Heart left ventricle (tissue), 16 donors: ENCODE measurements at regions of chr3 and their contacts with region 1.

Region 1: DNA sequence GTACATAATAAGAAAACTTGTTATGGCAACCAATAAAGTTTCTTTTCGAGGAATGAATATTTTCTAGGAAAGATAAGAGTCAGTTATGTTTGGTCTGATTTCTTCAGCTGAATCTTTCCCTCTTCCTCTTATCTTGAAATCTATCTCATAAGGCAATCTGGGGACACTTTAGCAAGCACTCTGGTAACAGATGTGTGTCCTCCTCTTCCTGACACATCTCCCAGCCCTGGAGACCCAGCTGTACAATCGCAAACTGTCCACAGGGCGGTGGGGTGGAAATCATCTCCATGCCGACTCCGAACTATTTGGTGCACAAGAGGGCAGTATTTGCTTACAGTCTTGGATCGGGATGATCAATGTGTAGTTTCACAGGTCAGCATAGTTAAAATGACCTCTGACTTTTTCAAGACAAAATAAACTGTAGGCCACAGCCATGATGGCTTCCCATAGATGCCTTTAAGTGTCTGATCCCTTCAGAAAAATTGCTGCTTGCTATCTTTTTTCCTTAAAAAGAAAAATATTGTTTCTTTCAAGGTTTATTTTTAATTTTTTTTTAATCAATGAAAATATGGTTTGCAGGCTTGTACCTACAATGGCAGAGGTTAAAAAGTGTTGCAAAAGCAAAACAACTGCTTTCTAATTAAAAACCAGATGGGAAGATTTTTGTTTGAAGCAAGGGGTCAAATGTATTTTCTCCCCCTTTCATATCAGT is 17.7 kb downstream of the EEFSEC start:
- DNase-seq: peak in 4 of 5 donors; percentile 55 to 64 (median 62)
- ATAC-seq: peak; percentile 54 to 75 (median 72)
- H3K4me3 ChIP-seq: no peak overlapping the region
- H3K27ac ChIP-seq: no peak overlapping the region
- H3K4me1 ChIP-seq: peaks cover 0 to 73% (median 40%) of the 10 kb centered on the region in 12 donors
- H3K27me3 ChIP-seq: no peaks in the 10 kb centered on the region
- CTCF ChIP-seq: peak; percentile 49 to 88 (median 68)
- POLR2A ChIP-seq: no peak

Region 2: DNA sequence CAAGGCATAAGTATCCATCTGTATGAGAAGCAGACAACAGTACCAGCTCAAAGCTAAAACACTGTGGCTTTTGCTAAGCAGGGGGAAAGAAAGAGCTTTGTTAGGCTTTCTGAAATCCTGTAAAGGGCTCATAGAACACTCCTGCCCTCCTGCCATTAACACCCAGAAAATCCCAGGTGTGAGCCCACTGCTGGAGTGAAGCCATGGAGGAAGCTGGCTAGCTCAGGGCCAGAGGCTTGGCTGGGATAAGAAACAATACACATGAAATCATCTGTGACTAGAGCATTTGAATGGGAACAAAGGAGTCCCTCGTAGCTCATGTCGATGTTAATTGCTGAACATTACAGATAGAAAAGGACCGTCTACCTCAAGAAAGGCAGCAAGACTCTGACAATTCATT is 70.8 kb before region 1 on chr3:
- intact Hi-C with region 1: no loop called
- DNase-seq: no peak
- ATAC-seq: peak in 1 of 4 donors; percentile 28
- H3K4me3 ChIP-seq: no peak overlapping the region
- H3K27ac ChIP-seq: peak overlapping the region in 6 of 12 donors; percentile 3 to 41 (median 32)
- H3K4me1 ChIP-seq: peaks cover 0 to 23% (median 6%) of the 10 kb centered on the region in 12 donors
- H3K27me3 ChIP-seq: no peaks in the 10 kb centered on the region
- CTCF ChIP-seq: no peak
- POLR2A ChIP-seq: no peak

Region 3: DNA sequence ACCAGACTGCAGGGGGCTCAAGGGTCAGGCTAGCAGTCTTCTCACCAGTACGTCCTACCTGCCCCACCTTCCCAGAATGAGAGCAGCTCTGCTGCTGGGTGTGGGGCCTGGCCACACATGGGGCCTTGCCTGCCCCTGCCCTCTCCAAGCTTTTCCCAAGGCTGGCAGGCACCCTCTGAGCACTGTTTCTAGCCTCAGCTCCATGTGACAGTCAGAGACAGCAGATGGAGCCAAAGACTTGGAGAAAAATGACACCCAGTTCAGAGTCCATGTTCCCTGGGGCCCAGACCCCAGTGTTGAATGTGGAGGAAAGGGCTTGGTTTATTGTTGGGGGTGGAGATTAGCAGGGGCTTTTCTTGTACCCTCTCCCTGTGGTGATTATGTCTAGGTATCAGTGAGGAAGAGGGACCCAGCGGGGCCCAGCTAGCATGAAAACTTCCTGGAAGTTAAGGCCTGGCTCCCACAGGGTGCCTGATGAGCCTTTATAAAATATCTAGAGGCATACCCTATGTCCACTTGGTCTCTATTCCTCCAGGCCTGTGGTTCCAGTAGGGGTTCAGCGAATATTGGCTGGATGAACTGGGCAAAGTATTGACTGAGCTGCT is 136.2 kb after region 1 on chr3:
- intact Hi-C with region 1: loop called in 2 of 10 experiments (anchors 10 kb)
- DNase-seq: peak in 1 of 5 donors; percentile 9
- ATAC-seq: peak in 1 of 4 donors; percentile 18
- H3K4me3 ChIP-seq: no peak overlapping the region
- H3K27ac ChIP-seq: no peak overlapping the region
- H3K4me1 ChIP-seq: peaks cover 0 to 40% (median 8%) of the 10 kb centered on the region in 12 donors
- H3K27me3 ChIP-seq: no peaks in the 10 kb centered on the region
- CTCF ChIP-seq: peak in 2 of 12 donors; percentile 20 to 28
- POLR2A ChIP-seq: no peak

Region 4: DNA sequence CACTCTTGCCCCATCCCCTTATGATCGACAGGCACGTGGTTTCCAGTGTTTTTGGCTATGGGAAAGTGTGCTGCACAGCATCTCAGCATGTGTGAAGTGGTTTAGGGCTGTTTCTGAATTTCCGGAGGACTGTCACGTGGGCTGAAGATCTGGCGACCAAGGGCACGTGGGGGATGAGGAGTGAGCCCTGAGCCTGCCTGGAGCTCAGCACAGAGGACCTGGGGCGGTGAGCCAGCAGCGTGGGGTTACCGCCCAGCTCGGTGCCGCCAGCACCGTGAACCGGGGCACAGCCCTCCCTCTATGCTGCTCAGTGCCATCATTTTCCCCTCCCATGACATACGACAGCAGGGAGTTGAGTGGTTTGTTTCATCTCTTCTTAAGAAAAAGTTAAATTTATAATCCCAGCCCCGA is 145.5 kb after region 1 on chr3:
- intact Hi-C with region 1: loop called in 9 of 10 experiments (anchors 5 to 10 kb)
- DNase-seq: peak in 1 of 5 donors; percentile 13
- ATAC-seq: peak in 2 of 4 donors; percentile 21 to 32
- H3K4me3 ChIP-seq: no peak overlapping the region
- H3K27ac ChIP-seq: no peak overlapping the region
- H3K4me1 ChIP-seq: peaks cover 0 to 20% (median 3%) of the 10 kb centered on the region in 12 donors
- H3K27me3 ChIP-seq: no peaks in the 10 kb centered on the region
- CTCF ChIP-seq: no peak
- POLR2A ChIP-seq: no peak

Region 5: DNA sequence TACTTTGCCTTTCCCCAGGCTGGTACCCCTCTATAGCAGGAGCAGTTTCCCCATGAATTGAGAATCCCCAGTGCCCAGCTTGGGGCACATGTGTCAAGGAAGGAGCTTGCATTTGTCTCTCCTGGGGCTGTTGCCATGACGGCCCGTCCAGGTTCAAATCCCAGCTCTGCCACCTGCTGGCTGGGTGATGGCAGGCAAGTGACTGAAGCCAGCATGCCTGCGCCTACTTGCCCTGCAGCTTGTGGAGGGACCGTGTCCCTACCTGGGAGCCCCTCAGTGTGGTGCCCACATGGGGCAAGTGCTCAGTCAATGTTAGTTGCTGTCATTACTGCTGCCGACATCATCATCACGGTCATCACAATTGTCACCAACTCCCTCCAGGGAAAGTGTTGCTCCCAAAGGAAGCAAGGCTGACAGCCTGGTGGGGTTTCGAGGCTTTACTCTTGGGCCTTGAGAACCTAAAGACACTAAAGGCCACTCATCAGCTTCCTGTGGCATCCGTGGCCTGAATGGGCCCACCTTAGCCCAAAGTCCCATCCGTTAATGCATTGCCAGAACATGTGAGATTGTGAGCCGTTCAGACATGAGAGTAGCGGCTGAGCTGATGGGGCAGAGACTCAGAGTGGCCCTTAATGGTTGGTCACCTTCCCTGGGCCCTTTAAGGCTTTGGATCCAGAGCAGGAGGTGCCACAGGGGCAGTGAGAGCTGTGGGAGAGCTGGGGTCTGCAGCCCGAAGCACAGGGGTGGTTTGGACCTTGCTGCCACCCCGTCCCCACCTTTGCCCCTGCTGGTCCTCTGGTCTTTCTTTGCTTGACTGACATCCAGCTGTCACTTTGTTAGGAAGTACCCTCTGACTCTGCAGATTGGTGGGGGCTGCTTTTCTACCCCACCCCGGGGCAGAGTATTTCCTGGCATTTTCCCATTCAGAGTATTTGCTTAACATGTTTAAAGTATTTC is 151.4 kb after region 1 on chr3:
- intact Hi-C with region 1: loop called (anchors 2 to 10 kb)
- DNase-seq: peak; percentile 41 to 80 (median 49)
- ATAC-seq: peak; percentile 45 to 72 (median 56)
- H3K4me3 ChIP-seq: no peak overlapping the region
- H3K27ac ChIP-seq: no peak overlapping the region
- H3K4me1 ChIP-seq: peaks cover 0 to 14% (median 0%) of the 10 kb centered on the region in 12 donors
- H3K27me3 ChIP-seq: no peaks in the 10 kb centered on the region
- CTCF ChIP-seq: peak; percentile 34 to 72 (median 56)
- POLR2A ChIP-seq: no peak

Region 6: GRCh38 chr3:128603811-128604775 is 433.1 kb after region 1 on chr3:
- intact Hi-C with region 1: loop called in 6 of 10 experiments (anchors 1 to 10 kb)
- DNase-seq: no peak
- ATAC-seq: no peak
- H3K4me3 ChIP-seq: no peak overlapping the region
- H3K27ac ChIP-seq: no peak overlapping the region
- H3K4me1 ChIP-seq: peaks cover 0 to 15% (median 7%) of the 10 kb centered on the region in 12 donors
- H3K27me3 ChIP-seq: no peaks in the 10 kb centered on the region
- CTCF ChIP-seq: no peak
- POLR2A ChIP-seq: no peak